Aorta (tissue), 5 donors: ENCODE measurements at regions of chrX and their contacts with region 1.

Region 1: DNA sequence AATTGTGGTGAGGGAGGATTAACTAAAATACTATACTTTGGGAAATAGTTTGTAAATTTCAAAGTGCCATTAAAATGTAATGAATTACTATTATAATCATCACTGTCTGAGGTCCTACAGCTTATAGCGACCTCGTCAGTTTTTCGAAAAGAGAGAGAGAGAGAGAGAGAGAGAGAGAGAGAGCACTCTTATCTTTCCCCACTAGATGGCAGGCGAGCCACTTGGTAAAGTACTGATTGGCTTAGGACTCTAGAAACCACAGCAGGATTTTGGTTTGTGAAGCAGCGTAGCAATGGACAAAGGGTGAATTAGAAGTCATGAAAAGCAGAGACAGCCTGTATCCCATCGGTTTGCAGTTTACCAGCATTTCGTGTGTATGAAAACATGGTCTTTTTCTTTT is 52.5 kb downstream of the LINC00632 start:
- DNase-seq: no peak
- ATAC-seq: peak; percentile 65
- H3K4me3 ChIP-seq: no peak overlapping the region
- H3K27ac ChIP-seq: no peak overlapping the region
- H3K4me1 ChIP-seq: no peaks in the 10 kb centered on the region
- H3K27me3 ChIP-seq: no peaks in the 10 kb centered on the region

Region 2: DNA sequence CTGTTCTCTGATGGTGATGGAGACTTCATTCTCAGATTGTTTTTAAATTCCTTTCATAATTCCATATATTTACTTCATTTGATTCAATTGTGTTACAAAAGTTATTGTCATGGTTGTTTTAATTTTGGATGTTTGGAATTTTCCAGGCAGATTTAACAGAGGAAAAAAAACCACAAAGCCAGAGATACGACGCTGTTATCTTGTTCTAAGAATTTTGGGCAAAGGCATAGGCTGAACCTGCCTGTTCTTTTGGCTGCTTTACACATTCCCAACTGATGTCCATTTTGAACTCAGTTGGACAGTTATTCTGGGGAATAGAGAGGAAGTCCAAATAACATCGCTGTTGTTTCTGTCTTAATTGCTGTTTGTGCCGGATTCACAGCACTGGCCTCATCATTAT is 13.2 kb after region 1 on chrX:
- intact Hi-C with region 1: no loop called
- DNase-seq: no peak
- ATAC-seq: no peak
- H3K4me3 ChIP-seq: no peak overlapping the region
- H3K27ac ChIP-seq: no peak overlapping the region
- H3K4me1 ChIP-seq: no peaks in the 10 kb centered on the region
- H3K27me3 ChIP-seq: no peaks in the 10 kb centered on the region

Region 3: DNA sequence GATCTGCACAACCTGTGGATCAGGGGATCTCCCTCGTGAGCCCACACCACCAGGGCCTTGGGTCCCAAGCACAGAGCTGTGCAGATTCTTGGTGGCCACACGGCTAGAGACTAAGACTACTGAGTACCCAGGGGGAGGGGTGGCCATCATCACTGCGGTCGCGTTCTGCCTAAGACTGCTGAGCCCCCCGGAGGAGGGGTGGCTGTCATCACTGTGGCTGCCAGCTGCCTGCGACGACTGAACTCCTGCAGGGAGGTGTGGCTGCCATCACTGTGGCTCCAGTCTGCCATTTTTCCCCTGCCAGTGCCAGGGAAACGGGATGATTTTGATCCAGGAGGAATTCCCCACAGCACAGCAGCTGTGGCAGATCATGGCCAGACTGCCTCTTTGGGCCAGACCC is 98.7 kb after region 1 on chrX:
- intact Hi-C with region 1: no loop called
- DNase-seq: no peak
- ATAC-seq: no peak
- H3K4me3 ChIP-seq: no peak overlapping the region
- H3K27ac ChIP-seq: no peak overlapping the region
- H3K4me1 ChIP-seq: no peaks in the 10 kb centered on the region
- H3K27me3 ChIP-seq: no peaks in the 10 kb centered on the region

Region 4: DNA sequence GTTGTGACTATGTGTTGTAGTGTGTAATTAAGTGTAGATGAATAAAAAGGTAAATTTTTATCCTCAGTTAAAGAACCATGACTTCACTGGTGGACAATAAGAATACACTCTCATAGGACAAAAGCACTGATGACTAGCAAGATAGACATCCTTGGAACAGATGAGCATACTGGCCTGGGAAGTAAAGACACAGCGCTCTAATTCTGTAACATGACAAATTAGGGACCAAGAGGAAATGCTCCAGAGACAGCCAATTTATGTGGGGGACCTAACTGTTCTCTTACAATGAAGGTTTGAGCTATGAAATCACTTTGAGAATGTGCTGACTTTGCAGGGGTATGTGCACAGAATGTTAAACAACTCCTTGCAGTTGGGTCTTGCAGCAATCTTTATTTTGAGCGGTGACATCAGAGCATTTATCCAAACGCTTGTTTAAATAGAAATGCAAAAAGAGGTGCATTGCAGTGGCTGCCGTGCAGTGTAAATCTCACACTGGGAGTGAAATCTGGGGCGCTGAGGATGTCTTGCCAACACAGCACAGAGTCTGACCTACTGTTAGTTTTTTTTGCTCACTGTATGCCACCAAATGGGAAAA is 1333.7 kb after region 1 on chrX:
- intact Hi-C with region 1: loop called in 1 of 2 experiments (anchors 10 kb)
- DNase-seq: no peak
- ATAC-seq: no peak
- H3K4me3 ChIP-seq: no peak overlapping the region
- H3K27ac ChIP-seq: no peak overlapping the region
- H3K4me1 ChIP-seq: no peaks in the 10 kb centered on the region
- H3K27me3 ChIP-seq: no peaks in the 10 kb centered on the region

Region 5: GRCh38 chrX:142601792-142602191 is 1839.7 kb after region 1 on chrX:
- intact Hi-C with region 1: loop called in 1 of 2 experiments (anchors 10 kb)
- DNase-seq: no peak
- ATAC-seq: no peak
- H3K4me3 ChIP-seq: no peak overlapping the region
- H3K27ac ChIP-seq: no peak overlapping the region
- H3K4me1 ChIP-seq: no peaks in the 10 kb centered on the region
- H3K27me3 ChIP-seq: no peaks in the 10 kb centered on the region